ENCODE measurements at regions of chr10 and their contacts with region 1.

Region 1: DNA sequence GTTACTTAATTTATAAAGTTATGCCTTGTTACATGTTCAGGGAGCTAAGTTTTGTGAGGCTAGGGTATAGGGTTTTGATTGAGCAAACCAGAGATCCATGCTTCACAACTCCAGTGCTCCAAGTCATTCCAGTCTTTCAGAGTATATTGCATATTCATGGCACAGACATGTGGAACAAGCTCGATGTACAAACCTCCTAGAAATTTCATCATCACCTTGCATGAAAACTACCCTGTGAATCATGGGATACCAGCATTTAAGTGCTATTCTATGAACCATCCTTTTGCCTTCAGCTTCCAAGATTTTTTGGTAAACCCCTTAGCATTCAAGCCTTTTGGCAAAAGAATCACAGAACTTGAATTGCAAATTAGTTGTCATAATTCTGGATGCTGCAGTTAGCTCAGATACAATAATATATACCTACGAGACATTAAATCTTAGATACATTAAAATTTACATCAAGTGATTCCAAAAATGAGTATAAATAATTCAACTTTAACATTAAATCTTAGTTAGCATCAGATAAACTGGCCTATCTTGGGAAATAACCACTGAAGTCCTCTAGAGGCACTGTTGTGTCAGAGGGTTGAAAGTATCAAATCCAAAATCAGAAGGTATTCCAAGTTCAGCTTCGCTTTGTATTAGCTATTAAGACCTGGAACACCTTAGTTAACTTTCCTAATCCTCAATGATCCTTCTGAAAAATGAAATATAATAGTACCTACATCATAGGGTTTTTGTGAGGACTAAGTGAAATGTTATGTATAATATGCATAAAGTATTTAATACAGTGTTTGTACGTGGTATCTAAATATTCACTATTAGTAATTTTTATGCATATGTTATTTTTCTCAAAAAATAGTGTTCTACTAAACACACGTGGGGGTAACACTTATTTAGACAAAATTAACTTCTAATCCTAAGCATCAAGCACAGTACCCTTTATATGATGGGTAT is 55.5 kb upstream of the CABCOCO1 start:
- DNase-seq: no peak
- H3K4me3 ChIP-seq: no peak overlapping the region
- H3K27ac ChIP-seq: no peak overlapping the region
- H3K4me1 ChIP-seq: no peaks in the 10 kb centered on the region
- H3K27me3 ChIP-seq: no peaks in the 10 kb centered on the region
- CTCF ChIP-seq: peak; percentile 73

Region 2: GRCh38 chr10:61721431-61721830 is 114.2 kb after region 1 on chr10:
- CTCF ChIA-PET with region 1: no interaction called
- POLR2A ChIA-PET with region 1: no interaction called
- intact Hi-C with region 1: loop called (anchors 10 kb)
- DNase-seq: no peak
- H3K4me3 ChIP-seq: no peak overlapping the region
- H3K27ac ChIP-seq: no peak overlapping the region
- H3K4me1 ChIP-seq: no peaks in the 10 kb centered on the region
- H3K27me3 ChIP-seq: no peaks in the 10 kb centered on the region
- CTCF ChIP-seq: no peak

Measured in PC-9 (cell line).